Activated CD4-positive, alpha-beta T cell treated with anti-CD3 and anti-CD28 coated beads, Interleukin-2, amount 10 ng/mL, durations not matched to agents 7 days and 5 days (primary cell): ENCODE measurements at regions of chr3 and their contacts with region 1.

Region 1: GRCh38 chr3:40181182-40181581 is 128.3 kb upstream of the EIF1B start:
- DNase-seq: no peak
- H3K4me3 Mint-ChIP-seq: no peak overlapping the region
- H3K27ac Mint-ChIP-seq: no peak overlapping the region
- H3K4me1 Mint-ChIP-seq: no peaks in the 10 kb centered on the region
- H3K27me3 Mint-ChIP-seq: peaks cover 3% of the 10 kb centered on the region

Region 2: GRCh38 chr3:39855517-39855916 is 325.7 kb before region 1 on chr3:
- CTCF ChIA-PET with region 1: no interaction called
- POLR2A ChIA-PET with region 1: no interaction called
- DNase-seq: no peak
- H3K4me3 Mint-ChIP-seq: no peak overlapping the region
- H3K27ac Mint-ChIP-seq: no peak overlapping the region
- H3K4me1 Mint-ChIP-seq: no peaks in the 10 kb centered on the region
- H3K27me3 Mint-ChIP-seq: peaks cover 4% of the 10 kb centered on the region

Region 3: DNA sequence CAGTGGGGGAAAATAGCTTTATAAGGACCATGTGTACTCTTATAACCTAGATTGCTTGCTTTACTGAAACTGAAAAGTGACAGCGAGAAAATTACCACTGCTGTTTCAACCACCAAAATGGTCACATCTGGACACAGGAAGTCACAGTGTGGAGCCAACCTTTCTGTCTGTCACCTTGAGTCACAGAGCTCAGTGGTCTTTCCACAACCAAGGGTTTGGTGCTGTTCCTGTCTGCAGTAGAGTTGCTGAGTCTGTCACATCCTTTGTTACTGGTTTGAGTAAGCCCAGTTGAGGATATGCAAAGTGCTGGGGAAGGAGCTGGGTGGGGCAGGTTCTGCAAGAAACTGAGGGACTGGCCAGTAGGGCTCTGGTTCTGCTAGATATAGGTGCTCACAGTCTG is 10.8 kb before region 1 on chr3:
- CTCF ChIA-PET with region 1: no interaction called
- POLR2A ChIA-PET with region 1: no interaction called
- DNase-seq: no peak
- H3K4me3 Mint-ChIP-seq: no peak overlapping the region
- H3K27ac Mint-ChIP-seq: no peak overlapping the region
- H3K4me1 Mint-ChIP-seq: peaks cover 8% of the 10 kb centered on the region
- H3K27me3 Mint-ChIP-seq: no peaks in the 10 kb centered on the region

Region 4: DNA sequence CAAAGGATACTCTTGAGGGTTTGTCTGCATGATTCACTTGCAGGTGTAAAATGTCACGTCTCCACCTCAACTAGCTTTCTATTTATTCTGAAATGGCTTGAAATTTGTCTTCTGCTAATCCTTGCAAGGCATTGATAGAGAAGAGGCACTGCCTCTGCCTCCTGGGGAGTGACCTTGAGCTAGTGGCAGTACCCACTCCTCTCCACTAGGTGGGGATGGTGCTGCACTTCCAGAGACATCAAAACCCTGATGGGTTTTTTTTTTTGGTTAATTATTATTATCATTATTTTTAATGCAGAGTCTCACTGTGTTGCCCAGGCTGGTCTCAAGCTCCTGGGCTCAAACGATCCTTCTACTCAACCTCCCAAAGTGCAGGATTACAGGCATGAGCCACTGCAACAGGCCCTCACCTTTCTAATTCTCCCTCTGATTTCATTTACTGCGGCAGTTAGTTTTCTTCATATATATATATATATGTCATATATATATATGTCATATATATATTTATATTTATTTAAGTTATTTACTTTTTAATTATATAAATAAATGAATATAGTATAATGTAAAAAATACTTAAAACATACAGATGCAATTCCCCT is 10.8 kb after region 1 on chr3:
- CTCF ChIA-PET with region 1: interaction called, 10 read pairs
- POLR2A ChIA-PET with region 1: no interaction called
- DNase-seq: peak; percentile 59
- H3K4me3 Mint-ChIP-seq: no peak overlapping the region
- H3K27ac Mint-ChIP-seq: no peak overlapping the region
- H3K4me1 Mint-ChIP-seq: no peaks in the 10 kb centered on the region
- H3K27me3 Mint-ChIP-seq: peaks cover 3% of the 10 kb centered on the region